ENCODE measurements at regions of chr19 and their contacts with region 1.

Region 1: DNA sequence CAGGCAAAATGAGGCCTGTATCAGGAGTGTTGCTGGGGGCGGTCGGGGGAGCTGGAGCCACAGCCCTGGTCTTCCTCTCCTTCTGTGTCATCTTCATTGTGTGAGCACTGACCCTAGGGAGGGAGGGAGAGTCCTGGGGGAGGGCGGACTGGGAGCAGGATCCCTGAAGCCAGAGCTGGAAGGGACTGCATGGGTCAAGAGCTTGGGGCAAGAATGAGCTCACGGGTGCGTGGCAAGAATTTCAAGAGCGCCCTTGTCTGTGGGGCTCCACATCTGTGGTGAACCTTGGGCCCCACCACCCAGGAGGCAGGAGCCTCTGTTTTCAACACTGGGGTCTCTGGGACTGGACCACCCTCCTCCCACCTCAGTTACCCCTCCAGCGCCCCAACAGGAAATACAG is 4.7 kb downstream of the SIGLEC7 start:
- DNase-seq: no peak
- ATAC-seq: no peak
- H3K4me3 ChIP-seq: no peak overlapping the region
- H3K27ac ChIP-seq: no peak overlapping the region
- H3K4me1 ChIP-seq: no peaks in the 10 kb centered on the region
- H3K27me3 ChIP-seq: peaks cover 66% of the 10 kb centered on the region
- CTCF ChIP-seq: no peak

Region 2: GRCh38 chr19:51121257-51121656 is 25.5 kb before region 1 on chr19:
- CTCF ChIA-PET with region 1: no interaction called
- POLR2A ChIA-PET with region 1: no interaction called
- intact Hi-C with region 1: no loop called
- DNase-seq: no peak
- ATAC-seq: no peak
- H3K4me3 ChIP-seq: no peak overlapping the region
- H3K27ac ChIP-seq: no peak overlapping the region
- H3K4me1 ChIP-seq: no peaks in the 10 kb centered on the region
- H3K27me3 ChIP-seq: peaks cover 24% of the 10 kb centered on the region
- CTCF ChIP-seq: no peak

Region 3: GRCh38 chr19:51131780-51132680 is 14.7 kb before region 1 on chr19:
- CTCF ChIA-PET with region 1: no interaction called
- POLR2A ChIA-PET with region 1: interaction called, 17 read pairs
- intact Hi-C with region 1: no loop called
- DNase-seq: no peak
- ATAC-seq: no peak
- H3K4me3 ChIP-seq: no peak overlapping the region
- H3K27ac ChIP-seq: no peak overlapping the region
- H3K4me1 ChIP-seq: peaks cover 25% of the 10 kb centered on the region
- H3K27me3 ChIP-seq: peaks cover 29% of the 10 kb centered on the region
- CTCF ChIP-seq: no peak; the same call in 1 of the 2 replicates

Region 4: DNA sequence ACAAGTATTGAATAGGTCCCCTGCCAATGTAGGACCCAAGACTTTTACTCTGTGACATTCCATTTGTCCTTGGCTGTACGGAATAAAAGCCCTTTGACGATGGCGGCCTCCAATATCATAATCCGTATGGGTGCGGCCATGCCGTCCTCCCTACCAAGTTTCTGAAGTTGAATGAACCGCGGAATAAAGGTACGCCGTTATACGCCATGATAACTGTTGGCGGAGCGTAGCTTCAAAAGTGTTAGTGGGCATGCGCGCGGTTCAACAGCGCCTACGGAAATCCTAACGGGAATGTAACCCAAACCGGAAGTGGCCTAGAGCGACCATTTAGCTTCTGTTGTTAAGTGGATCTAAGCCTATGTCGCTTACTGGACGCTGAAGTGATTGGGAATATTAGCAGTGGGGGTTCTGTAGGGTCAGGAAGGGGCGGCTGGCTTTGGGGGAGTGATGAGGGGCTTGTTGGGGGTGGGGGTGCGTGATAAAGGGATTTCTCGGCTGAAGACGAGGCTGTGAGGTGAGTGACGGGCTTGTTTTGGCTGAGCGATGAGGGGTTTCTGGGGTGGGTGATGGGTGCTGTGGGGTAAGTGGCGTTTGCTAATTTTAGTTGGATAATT is 424.3 kb after region 1 on chr19 and contains the start of gene ZNF175:
- CTCF ChIA-PET with region 1: no interaction called
- POLR2A ChIA-PET with region 1: no interaction called
- intact Hi-C with region 1: no loop called
- DNase-seq: peak; percentile 100
- ATAC-seq: peak; percentile 65
- H3K4me3 ChIP-seq: peak within 1 kb of the TSS; percentile 81
- H3K27ac ChIP-seq: peak within 1 kb of the TSS; percentile 75
- H3K4me1 ChIP-seq: peaks cover 71% of the 10 kb centered on the region
- H3K27me3 ChIP-seq: no peaks in the 10 kb centered on the region
- CTCF ChIP-seq: no peak
- total RNA-seq, gene ZNF175: 7.5 and 8.5 TPM in 2 replicates

Region 5: DNA sequence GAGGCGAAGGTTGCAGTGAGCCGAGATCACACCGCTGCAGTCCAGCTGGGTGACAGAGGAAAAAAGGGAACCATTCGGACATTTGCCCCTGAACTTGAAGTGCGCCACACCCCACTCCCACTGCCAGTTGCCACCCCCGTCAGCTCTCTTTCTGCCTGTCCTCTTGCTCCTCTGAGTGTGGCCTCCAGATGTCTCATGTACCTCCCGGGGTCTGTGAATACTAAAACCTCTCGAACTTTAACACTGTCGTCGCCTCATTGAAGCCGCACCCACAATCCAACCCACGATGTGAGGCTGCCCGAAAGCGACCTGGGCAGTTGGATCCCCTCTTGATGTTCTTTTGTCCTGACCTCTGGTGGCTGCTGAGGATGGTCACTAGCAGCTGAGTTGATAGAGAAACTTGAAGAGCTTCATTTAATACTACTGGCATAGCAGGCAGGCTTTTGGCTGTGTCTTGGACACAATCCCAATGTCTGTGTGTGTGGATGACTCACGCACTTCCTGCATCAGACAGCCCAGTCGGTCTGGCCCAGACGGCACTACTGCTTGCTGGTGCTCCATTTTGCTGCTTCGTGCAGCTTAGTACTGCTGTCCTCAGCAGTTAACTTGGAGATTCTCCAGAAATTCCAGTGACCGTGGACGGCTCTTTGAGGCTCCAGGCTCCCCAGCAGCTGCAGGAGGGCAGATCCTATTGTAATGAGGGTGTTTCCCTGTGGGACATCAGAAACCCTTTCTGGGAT is 652.5 kb after region 1 on chr19:
- CTCF ChIA-PET with region 1: no interaction called
- POLR2A ChIA-PET with region 1: no interaction called
- intact Hi-C with region 1: no loop called
- DNase-seq: peak; percentile 98
- ATAC-seq: peak; percentile 100
- H3K4me3 ChIP-seq: no peak overlapping the region
- H3K27ac ChIP-seq: peak overlapping the region; percentile 43
- H3K4me1 ChIP-seq: peaks cover 15% of the 10 kb centered on the region
- H3K27me3 ChIP-seq: no peaks in the 10 kb centered on the region
- CTCF ChIP-seq: peak; percentile 52